ENCODE measurements at regions of chr12 and their contacts with region 1.

Region 1: GRCh38 chr12:120086801-120087621 is 29.5 kb downstream of the RAB35 start:
- DNase-seq: peak; percentile 99
- H3K4me3 ChIP-seq: peak overlapping the region; percentile 1 to 34 (median 27)
- H3K27ac ChIP-seq: peak overlapping the region; percentile 8
- H3K4me1 ChIP-seq: peaks cover 10% of the 10 kb centered on the region
- H3K27me3 ChIP-seq: no peaks in the 10 kb centered on the region
- CTCF ChIP-seq: peak; percentile 90 to 99

Region 2: DNA sequence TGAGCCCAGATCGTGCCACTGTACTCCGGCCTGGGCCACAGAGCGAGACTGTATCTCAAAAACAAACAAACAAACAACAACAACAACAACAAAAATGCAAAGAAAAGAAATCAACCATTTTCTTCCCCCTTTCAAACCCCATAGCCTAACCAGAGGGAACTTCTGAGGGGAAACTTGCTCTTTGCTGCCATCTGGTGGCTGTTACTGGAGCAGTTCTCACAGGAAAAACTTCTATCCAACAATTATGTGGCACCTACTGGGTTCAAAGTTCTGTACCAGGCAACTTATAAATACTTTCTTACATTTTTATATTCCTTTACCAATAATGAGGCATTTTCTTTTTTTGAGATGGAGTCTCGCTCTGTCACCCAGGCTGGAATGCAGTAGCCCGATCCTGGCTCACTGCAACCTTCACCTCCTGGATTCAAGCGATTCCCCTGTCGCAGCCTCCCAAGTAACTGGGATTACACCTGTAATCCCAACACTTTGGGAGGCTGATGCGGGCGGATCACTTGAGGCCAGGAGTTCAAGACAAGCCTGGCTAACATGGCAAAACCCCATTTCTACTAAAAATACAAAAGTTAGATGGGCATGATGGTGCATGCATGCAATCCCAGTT is 148.9 kb before region 1 on chr12:
- CTCF ChIA-PET with region 1: no interaction called
- dilution Hi-C with region 1: no loop called
- in situ Hi-C with region 1: no loop called
- intact Hi-C with region 1: loop called (anchors 1 kb)
- DNase-seq: peak; percentile 27
- H3K4me3 ChIP-seq: no peak overlapping the region
- H3K27ac ChIP-seq: no peak overlapping the region
- H3K4me1 ChIP-seq: peaks cover 7% of the 10 kb centered on the region
- H3K27me3 ChIP-seq: no peaks in the 10 kb centered on the region
- CTCF ChIP-seq: peak; percentile 80 to 94

Region 3: DNA sequence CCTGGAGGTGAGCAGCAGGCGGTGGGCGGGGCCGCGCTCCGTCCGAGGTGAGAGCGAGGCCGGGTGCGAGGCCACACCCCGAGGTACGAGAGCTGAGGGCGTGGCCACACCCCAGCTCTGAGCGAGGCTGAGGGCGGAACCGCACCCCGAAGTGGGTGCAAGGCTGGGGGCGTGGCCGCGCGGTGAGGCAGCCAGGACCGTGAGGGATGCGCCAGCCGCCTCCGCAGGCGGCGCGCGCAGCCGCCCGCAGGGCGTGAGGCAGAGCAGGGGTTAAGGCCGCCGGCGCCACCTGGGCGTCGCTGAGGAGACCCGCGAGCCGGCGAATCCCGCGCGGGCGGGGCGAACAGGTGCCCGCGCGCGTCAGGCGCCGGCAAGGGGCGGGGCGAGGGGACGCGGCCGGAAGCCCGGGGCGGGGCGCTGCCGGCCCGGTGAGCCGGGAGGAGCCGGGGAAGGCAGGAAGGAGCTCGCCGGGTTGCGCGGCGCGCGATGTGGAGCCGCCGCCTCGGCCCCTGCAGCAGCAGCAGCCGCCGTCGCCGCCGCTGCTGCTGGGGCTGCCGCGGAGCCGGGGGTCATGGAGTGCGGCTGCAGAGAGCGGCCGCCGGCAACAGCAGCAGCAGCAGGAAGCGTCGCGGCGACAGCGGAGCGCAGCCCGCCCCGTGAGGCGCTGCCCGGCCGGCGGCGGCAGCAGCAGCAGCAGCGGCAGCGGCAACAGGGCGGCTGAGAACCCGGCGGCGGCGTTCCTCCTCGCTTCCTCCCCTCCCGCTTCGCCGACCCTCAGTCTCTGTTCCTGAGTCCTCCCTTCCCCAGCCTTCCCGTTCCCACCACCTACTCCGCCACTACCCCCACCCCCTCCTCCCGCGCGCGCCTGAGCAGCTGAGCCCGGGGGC is 98.0 kb before region 1 on chr12 and contains the start of gene BICDL1:
- CTCF ChIA-PET with region 1: interaction called, 9 read pairs
- dilution Hi-C with region 1: no loop called
- in situ Hi-C with region 1: no loop called
- intact Hi-C with region 1: loop called (anchors 1 kb)
- DNase-seq: peak; percentile 98
- H3K4me3 ChIP-seq: peak within 1 kb of the TSS; percentile 53 to 82 (median 58)
- H3K27ac ChIP-seq: peak within 1 kb of the TSS; percentile 21
- H3K4me1 ChIP-seq: peaks cover 15% of the 10 kb centered on the region
- H3K27me3 ChIP-seq: no peaks in the 10 kb centered on the region
- CTCF ChIP-seq: no peak
- total RNA-seq, gene BICDL1: 10.7 to 14.8 TPM

Region 4: DNA sequence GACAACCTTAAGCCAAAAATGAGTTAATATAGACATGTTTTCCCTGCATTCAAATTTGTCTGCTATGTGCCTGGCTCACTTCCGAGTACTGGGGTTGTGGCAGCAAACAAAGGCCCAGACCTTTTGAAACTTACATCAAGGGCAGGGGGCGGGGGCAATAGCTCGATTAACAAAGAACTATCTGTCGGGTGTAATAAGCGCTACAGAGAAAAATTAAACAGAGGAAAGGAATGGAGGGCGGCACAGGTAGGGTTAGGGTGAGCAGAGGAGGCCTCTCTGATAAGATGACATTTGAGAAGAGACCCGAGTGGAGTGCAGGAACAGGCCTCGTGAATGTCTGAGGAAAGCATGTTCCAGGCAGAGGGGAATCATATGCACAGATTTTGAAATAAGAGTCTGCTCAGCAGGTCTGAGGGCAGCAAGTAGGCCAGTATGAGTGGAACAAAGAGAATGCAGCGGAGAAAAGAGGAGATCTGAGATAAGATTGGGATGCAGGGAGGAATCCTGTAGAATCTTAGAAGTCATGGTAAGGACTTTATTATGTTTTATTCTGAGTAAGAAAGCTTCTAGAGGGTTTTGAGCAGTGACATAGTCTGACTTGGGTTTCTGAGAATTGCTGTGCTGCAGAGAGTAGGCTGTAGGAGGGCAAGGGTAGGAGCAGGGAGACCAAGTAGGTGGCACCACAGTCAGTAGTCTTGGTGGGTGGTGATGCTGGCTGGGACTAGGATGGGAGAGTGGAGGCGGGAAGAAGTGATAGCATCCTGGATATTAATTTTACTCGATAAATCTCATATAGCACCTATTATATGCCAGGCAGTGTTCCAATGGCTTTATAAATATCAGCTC is 45.4 kb before region 1 on chr12:
- CTCF ChIA-PET with region 1: no interaction called
- dilution Hi-C with region 1: no loop called
- in situ Hi-C with region 1: no loop called
- intact Hi-C with region 1: loop called (anchors 1 kb)
- DNase-seq: no peak
- H3K4me3 ChIP-seq: no peak overlapping the region
- H3K27ac ChIP-seq: peak overlapping the region; percentile 81
- H3K4me1 ChIP-seq: peaks cover 21% of the 10 kb centered on the region
- H3K27me3 ChIP-seq: no peaks in the 10 kb centered on the region
- CTCF ChIP-seq: no peak

Region 5: GRCh38 chr12:120055231-120056021 is 31.6 kb before region 1 on chr12:
- CTCF ChIA-PET with region 1: no interaction called
- dilution Hi-C with region 1: no loop called
- in situ Hi-C with region 1: no loop called
- intact Hi-C with region 1: loop called (anchors 1 kb)
- DNase-seq: peak; percentile 83
- H3K4me3 ChIP-seq: peak overlapping the region in 2 of 3 experiments; percentile 28 to 45
- H3K27ac ChIP-seq: peak overlapping the region; percentile 97
- H3K4me1 ChIP-seq: peaks cover 26% of the 10 kb centered on the region
- H3K27me3 ChIP-seq: no peaks in the 10 kb centered on the region
- CTCF ChIP-seq: no peak

Region 6: GRCh38 chr12:120067084-120067869 is 19.7 kb before region 1 on chr12:
- CTCF ChIA-PET with region 1: no interaction called
- dilution Hi-C with region 1: no loop called
- in situ Hi-C with region 1: no loop called
- intact Hi-C with region 1: loop called (anchors 2 kb)
- DNase-seq: no peak
- H3K4me3 ChIP-seq: no peak overlapping the region
- H3K27ac ChIP-seq: no peak overlapping the region
- H3K4me1 ChIP-seq: peaks cover 8% of the 10 kb centered on the region
- H3K27me3 ChIP-seq: no peaks in the 10 kb centered on the region
- CTCF ChIP-seq: no peak

Region 7: DNA sequence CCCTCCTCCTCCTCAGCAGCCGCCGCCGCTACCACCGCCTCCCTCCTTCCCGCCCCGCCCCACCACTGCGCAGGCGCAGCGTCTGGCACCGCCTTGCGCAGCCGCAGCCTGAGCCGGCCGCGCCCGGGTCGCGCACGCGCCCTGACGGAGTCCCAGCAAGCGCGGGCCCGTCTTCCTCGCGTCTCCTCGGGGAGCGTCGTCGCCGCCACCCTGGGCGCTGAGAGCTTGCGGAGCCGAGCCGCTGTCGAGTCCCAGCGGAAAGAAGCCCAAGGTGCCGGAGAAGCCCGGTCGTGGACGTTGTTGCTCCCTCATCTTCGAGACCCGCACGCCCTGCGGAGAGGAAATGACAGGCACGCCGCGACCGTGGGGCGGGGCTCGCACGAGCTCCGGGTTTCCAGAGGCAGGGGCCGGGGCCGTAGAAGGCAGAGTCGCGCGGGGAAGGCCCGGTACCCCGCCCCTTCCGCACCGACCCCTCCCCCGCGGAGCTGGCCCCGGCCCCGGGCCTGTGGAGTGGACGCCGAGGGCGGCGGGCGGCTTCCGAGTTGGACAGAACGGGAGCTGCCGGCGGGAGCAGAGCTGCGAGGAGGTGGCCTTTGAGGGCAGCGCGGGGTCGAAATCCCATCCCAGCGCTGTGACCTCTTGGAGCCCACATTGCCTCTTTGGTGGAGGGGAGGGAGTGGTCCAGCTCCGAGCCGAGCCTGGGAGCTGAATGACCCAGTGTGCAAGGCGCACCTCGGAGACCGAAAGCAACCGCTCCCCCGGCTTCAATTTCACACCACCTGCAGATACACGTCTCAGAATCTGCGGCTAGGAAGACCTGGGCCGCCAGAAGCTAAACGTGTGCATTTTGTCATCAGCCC is 30.0 kb after region 1 on chr12:
- CTCF ChIA-PET with region 1: no interaction called
- dilution Hi-C with region 1: no loop called
- in situ Hi-C with region 1: no loop called
- intact Hi-C with region 1: loop called (anchors 2 kb)
- DNase-seq: peak; percentile 91
- H3K4me3 ChIP-seq: peak overlapping the region; percentile 61 to 97 (median 95)
- H3K27ac ChIP-seq: peak overlapping the region; percentile 76
- H3K4me1 ChIP-seq: peaks cover 25% of the 10 kb centered on the region
- H3K27me3 ChIP-seq: no peaks in the 10 kb centered on the region
- CTCF ChIP-seq: no peak

Measured in mammary epithelial cell (primary cell).